ENCODE measurements at regions of chr5 and their contacts with region 1.

Region 1: DNA sequence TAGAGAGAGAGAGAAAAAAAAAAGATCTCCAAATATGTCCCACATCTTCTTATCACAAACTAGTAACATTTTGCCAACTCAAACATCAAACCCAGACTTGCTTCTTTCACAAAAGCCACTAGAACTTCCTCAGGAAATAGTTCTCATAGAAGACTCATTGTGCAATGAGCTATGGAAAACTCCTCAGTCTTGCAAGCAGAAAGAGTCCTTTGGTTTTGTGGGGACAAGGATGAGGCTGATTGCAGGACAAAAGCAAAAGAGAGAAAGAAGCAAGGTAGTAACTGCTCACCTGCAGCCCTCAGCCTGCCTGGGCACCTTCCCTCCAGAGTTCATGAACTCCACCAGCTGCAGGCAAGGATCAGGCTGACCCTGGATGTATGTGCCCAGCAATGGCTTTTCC is 399.0 kb downstream of the IRX1 start:
- DNase-seq: no peak

Region 2: GRCh38 chr5:2948875-2949274 is 1045.8 kb before region 1 on chr5:
- intact Hi-C with region 1: loop called in 1 of 2 experiments (anchors 10 kb)
- DNase-seq: no peak

Region 3: DNA sequence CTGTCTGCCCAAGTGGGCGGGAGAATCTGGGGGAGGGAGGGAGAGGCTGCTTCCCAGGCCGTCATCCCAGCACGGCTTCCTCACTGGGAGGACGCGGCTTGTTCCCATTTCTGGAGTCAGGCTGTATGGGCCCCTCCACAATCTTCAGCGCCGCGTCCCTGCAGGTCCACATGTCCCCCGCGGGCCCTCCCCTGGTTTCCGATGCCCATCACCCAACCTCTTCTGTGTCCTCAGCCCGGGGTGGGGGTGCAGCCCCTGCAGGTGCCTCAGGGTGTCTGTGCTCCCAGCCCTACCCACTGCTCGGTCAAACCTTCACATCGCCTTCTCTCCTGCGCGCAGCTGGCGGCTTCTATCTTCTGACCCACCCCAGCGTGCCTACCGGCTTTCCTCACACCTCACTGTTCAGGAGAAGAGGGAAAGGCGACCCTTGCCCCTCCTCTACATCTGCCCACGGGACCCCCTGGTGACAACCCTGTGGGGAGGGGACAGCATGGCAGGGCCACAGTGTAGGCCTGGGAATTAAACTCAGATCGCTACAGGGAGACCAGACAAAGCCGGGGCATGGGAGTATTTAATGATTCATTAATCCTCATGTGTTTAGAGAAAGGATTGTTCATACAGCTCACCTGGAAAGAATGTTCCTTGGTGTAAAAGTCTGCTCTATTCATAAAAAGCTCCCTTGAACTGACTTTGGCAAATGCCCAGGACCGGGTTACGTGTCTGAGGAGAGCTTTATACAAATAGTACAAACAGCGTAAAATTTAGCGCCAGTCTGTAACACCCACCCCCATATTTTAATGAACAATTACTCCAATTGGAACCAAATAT is 253.9 kb before region 1 on chr5:
- intact Hi-C with region 1: no loop called
- DNase-seq: no peak

Region 4: GRCh38 chr5:3913279-3913678 is 81.3 kb before region 1 on chr5:
- intact Hi-C with region 1: no loop called
- DNase-seq: no peak

Region 5: DNA sequence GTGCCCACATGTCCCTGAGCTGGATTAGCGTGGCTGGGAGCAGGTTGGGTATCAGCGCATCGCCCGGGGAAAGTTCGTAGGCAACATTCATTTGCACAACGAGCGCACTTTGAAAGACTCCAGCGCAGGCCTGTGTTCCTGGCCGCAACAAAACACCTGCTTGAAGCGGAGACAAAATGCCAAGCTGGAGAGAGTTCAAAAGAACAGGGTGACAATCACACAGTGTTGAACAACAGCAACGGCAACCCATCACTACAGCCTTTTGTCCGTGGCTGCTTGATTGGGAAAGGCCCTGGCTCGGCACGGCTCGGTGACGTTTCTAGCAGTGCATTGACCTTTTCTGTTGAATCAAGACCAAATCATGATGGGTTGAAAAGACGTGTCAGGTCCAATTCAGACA is 62.7 kb before region 1 on chr5:
- intact Hi-C with region 1: no loop called
- DNase-seq: no peak